A673 (cell line): ENCODE measurements at regions of chrX and their contacts with region 1.

Region 1: DNA sequence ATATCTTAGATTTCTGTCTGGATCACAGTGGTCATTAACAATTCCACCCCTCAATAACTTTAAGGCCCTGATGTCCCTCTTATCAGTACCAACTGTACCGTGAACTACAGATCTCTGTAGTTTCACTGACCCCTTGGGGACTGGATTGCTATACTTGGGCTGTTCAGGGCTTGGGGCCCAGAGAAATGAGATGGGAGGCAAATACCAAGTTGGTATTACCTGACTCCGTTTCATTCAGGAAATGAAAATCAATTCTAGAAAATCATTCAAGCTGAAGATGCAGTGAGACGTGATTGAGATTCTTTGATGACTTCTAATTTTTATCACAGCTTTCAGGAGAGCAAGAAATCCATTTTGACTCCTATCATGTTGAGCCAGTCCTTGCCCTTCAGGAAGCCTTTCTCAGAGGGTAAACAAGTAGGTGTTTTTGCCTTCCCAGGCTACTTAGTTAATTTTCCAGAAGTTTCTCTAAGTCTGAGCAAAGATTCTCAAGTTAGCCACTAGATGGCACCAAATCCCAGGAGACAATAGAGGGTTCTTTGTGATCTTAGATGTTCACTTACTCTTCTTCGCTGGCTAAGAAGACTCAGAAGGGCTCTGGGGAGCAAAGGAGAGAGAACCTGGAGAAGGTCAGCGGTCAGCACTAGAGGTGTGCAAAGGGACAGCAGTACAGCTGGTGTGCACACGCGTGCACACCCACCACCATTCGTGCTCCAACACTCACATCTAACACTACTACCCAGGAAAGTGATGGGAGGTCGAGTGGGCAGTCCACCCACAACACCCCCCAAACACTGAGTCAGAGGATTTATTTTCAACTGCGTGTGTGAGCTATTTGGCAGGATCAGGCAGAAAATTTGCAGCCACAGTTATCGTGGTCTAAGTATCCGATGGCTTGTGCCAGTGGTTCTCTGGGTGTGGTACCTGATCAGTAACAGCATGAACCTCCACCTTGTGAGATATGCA is 7.4 kb downstream of the HNRNPH2 start:
- DNase-seq: peak; percentile 84
- H3K4me3 ChIP-seq: no peak overlapping the region
- H3K27ac ChIP-seq: no peak overlapping the region
- H3K4me1 ChIP-seq: no peaks in the 10 kb centered on the region
- H3K27me3 ChIP-seq: no peaks in the 10 kb centered on the region
- CTCF ChIP-seq: peak; percentile 81

Region 2: DNA sequence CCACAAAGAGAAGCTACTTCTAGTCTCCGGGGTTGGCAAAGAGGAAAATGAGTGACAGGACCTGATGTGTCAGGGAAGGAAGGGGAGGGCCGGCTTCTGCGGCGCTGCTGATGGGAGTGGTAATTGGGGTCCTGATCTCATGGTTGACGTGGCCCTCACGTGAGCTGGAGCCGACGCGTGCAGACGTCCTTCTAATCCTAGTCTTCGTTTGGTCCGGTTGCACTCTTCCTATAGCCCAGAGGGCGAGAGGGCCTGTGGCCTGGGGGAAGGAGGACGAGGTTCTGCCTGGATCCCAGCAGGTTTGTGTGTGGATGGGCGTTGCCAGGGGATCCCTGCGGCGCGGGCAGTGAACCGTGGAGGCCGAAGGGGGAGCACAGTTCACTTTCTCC is 134.9 kb after region 1 on chrX and contains the start of gene ARMCX1:
- CTCF ChIA-PET with region 1: no interaction called
- POLR2A ChIA-PET with region 1: no interaction called
- intact Hi-C with region 1: loop called (anchors 10 kb)
- DNase-seq: peak; percentile 47
- H3K4me3 ChIP-seq: peak within 1 kb of the TSS; percentile 51
- H3K27ac ChIP-seq: peak within 1 kb of the TSS; percentile 18
- H3K4me1 ChIP-seq: no peaks in the 10 kb centered on the region
- H3K27me3 ChIP-seq: no peaks in the 10 kb centered on the region
- CTCF ChIP-seq: no peak
- total RNA-seq, gene ARMCX1: 6.1 and 6.2 TPM in 2 replicates